ENCODE measurements at regions of chr4 and their contacts with region 1.

Region 1: GRCh38 chr4:105548483-105548882 is 3.9 kb upstream of the ARHGEF38 start:
- DNase-seq: no peak
- H3K4me3 ChIP-seq: no peak overlapping the region
- H3K27ac ChIP-seq: no peak overlapping the region
- H3K27me3 ChIP-seq: no peaks in the 10 kb centered on the region
- CTCF ChIP-seq: no peak

Region 2: DNA sequence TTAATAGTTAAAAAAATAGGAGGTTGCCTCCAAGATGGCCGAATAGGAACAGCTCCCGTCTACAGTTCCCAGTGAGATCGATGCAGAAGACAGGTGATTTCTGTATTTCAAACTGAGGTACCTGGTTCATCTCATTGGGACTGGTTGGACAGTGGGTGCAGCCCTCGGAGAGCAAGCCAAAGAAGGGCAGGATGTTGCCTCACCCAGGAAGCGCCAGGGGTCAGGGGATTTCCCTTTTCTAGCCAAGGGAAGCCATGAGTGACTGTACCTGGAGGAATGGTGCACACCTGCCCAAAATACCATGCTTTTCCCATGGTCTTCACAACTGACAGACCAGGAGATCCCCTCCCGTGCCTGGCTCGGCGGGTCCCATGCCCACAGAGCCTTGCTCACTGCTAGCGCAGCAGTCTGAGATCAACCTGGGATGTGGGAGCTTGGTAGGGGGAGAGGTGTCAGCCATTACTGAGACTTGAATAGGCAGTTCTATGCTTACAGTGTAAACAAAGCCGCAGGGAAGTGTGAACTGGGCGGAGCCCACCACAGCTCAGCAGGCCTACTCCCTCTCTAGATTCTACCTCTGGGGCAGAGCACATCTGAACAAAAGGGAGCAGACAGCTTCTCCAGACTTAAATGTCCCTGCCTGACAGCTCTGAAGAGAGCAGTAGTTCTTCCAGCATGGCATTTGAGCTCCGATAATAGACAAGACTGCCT is 122.1 kb before region 1 on chr4:
- intact Hi-C with region 1: no loop called
- DNase-seq: no peak
- H3K4me3 ChIP-seq: no peak overlapping the region
- H3K27ac ChIP-seq: no peak overlapping the region
- H3K27me3 ChIP-seq: no peaks in the 10 kb centered on the region
- CTCF ChIP-seq: no peak

Region 3: DNA sequence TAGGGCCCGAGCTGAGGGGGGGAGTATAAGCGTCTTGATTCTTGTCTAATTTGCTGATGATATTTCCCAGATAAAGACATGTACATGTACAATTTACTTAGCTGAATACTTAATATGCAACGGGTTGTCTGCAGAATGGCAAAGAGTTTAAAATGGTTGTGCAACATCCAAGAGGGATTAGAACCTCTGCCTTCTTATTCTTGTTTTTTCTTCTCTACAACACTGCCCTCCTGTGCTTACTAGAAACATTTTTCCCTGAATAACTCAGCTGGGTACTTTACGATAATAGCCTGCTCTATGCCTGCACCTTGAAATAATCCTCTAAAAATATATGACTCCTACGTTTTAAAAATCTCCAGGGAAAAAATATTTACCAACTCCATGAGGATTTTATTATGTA is 118.2 kb after region 1 on chr4:
- intact Hi-C with region 1: loop called in 1 of 2 experiments (anchors 10 kb)
- DNase-seq: no peak
- H3K4me3 ChIP-seq: no peak overlapping the region
- H3K27ac ChIP-seq: no peak overlapping the region
- H3K27me3 ChIP-seq: peaks cover 0 to 4% (median 0%) of the 10 kb centered on the region in 45 donors
- CTCF ChIP-seq: peak in 43 of 56 donors; percentile 12 to 57 (median 35)

Measured in dorsolateral prefrontal cortex (tissue), 120 donors.